SK-N-SH (cell line): ENCODE measurements at regions of chr10 and their contacts with region 1.

Region 1: GRCh38 chr10:93080350-93081046 is 6.8 kb downstream of the CYP26A1 start:
- DNase-seq: peak; percentile 84
- H3K4me3 ChIP-seq: peak overlapping the region; percentile 15 to 42; a peak in 2 of 4 replicates
- H3K27ac ChIP-seq: no peak overlapping the region
- H3K4me1 ChIP-seq: peaks cover 0 to 10% of the 10 kb centered on the region in 2 experiments; a peak in 1 of 4 replicates
- H3K27me3 ChIP-seq: peaks cover 9% of the 10 kb centered on the region; the same call in 1 of the 2 replicates
- CTCF ChIP-seq: peak; percentile 88
- EP300 ChIP-seq: no peak
- RAD21 ChIP-seq: peak; percentile 78

Region 2: GRCh38 chr10:92267343-92267742 is 813.2 kb before region 1 on chr10:
- CTCF ChIA-PET with region 1: no interaction called
- POLR2A ChIA-PET with region 1: no interaction called
- DNase-seq: no peak
- H3K4me3 ChIP-seq: no peak overlapping the region
- H3K27ac ChIP-seq: no peak overlapping the region
- H3K4me1 ChIP-seq: no peaks in the 10 kb centered on the region
- H3K27me3 ChIP-seq: no peaks in the 10 kb centered on the region
- CTCF ChIP-seq: no peak
- EP300 ChIP-seq: no peak
- RAD21 ChIP-seq: no peak

Region 3: GRCh38 chr10:93062514-93063143 is 17.9 kb before region 1 on chr10:
- CTCF ChIA-PET with region 1: interaction called, 69 read pairs
- POLR2A ChIA-PET with region 1: no interaction called
- DNase-seq: peak; percentile 30
- H3K4me3 ChIP-seq: no peak overlapping the region
- H3K27ac ChIP-seq: no peak overlapping the region
- H3K4me1 ChIP-seq: peaks cover 0 to 6% of the 10 kb centered on the region in 2 experiments; a peak in 1 of 4 replicates
- H3K27me3 ChIP-seq: peaks cover 26% of the 10 kb centered on the region
- CTCF ChIP-seq: peak; percentile 13; the same call in 1 of the 2 replicates
- EP300 ChIP-seq: no peak
- RAD21 ChIP-seq: no peak

Region 4: GRCh38 chr10:93068411-93069244 is 11.9 kb before region 1 on chr10:
- CTCF ChIA-PET with region 1: interaction called, 69 read pairs
- POLR2A ChIA-PET with region 1: no interaction called
- DNase-seq: peak; percentile 71
- H3K4me3 ChIP-seq: peak overlapping the region in 1 of 2 experiments; percentile 35
- H3K27ac ChIP-seq: no peak overlapping the region
- H3K4me1 ChIP-seq: peaks cover 0 to 32% of the 10 kb centered on the region in 2 experiments; a peak in 1 of 4 replicates
- H3K27me3 ChIP-seq: peaks cover 59% of the 10 kb centered on the region
- CTCF ChIP-seq: 0 out of 2 replicates have a peak, but pooled peaks have one; percentile 18
- EP300 ChIP-seq: no peak
- RAD21 ChIP-seq: no peak

Region 5: GRCh38 chr10:93288654-93289634 is 208.4 kb after region 1 on chr10:
- CTCF ChIA-PET with region 1: interaction called, 16 read pairs
- POLR2A ChIA-PET with region 1: no interaction called
- DNase-seq: peak; percentile 77
- H3K4me3 ChIP-seq: no peak overlapping the region; a peak in 1 of 4 replicates
- H3K27ac ChIP-seq: no peak overlapping the region
- H3K4me1 ChIP-seq: no peaks in the 10 kb centered on the region
- H3K27me3 ChIP-seq: no peaks in the 10 kb centered on the region
- CTCF ChIP-seq: peak; percentile 80
- EP300 ChIP-seq: no peak
- RAD21 ChIP-seq: peak; percentile 89

Region 6: GRCh38 chr10:93363891-93364648 is 283.6 kb after region 1 on chr10:
- CTCF ChIA-PET with region 1: interaction called, 10 read pairs
- POLR2A ChIA-PET with region 1: no interaction called
- DNase-seq: no peak
- H3K4me3 ChIP-seq: no peak overlapping the region
- H3K27ac ChIP-seq: no peak overlapping the region
- H3K4me1 ChIP-seq: no peaks in the 10 kb centered on the region
- H3K27me3 ChIP-seq: no peaks in the 10 kb centered on the region
- CTCF ChIP-seq: no peak
- EP300 ChIP-seq: no peak
- RAD21 ChIP-seq: no peak